K562 (cell line): ENCODE measurements at regions of chr6 and their contacts with region 1.

Region 1: DNA sequence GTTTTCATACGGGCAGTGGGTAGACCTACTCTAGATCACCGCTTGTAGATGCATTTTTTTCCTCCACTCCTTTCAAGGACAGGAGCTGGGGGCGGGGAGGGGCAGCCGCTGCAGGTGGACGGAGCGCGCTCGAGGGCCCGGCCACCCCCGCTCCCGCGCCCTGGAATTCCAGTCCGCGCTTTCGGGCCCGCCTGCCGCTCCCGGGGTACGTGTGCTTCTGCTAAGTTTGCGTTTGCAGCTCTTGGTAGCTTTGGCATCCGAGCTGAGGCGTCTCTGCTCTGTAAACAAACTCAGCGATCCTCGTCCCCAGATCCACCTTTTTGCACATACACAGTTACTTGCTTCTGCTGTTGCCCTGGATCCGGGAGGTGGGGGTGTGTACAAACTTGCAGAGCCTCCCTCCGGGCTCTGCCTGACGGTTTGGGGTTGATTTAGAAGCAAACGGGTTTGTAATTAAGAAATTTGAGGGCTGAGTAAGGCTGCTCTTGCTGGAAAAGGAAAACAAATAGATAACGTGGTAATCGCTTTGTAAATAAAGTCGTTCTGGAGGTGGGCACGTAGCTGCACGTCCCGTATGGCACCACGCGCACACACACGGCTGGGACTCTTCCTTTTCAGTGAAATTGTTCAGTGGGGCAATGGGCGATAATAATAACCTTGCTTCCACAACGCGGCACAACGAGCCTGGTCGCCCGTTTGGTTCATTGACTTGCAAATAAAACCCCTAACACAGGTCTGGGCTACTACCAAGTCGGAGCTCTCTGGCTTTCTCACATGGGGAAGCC is 976 bp upstream of the CITED2 start:
- DNase-seq: peak; percentile 88 to 96 (median 89)
- ATAC-seq: peak; percentile 74
- H3K4me3 ChIP-seq: peak overlapping the region; percentile 83
- H3K27ac ChIP-seq: peak overlapping the region; percentile 97
- H3K4me1 ChIP-seq: peaks cover 43 to 45% of the 10 kb centered on the region in 2 experiments
- H3K27me3 ChIP-seq: no peaks in the 10 kb centered on the region
- CTCF ChIP-seq: peak in 1 of 3 experiments; percentile 47; a peak in 1 of 6 replicates
- EP300 ChIP-seq: peak; percentile 51
- POLR2A ChIP-seq: peak; percentile 78
- RAD21 ChIP-seq: peak; percentile 65 to 72

Region 2: DNA sequence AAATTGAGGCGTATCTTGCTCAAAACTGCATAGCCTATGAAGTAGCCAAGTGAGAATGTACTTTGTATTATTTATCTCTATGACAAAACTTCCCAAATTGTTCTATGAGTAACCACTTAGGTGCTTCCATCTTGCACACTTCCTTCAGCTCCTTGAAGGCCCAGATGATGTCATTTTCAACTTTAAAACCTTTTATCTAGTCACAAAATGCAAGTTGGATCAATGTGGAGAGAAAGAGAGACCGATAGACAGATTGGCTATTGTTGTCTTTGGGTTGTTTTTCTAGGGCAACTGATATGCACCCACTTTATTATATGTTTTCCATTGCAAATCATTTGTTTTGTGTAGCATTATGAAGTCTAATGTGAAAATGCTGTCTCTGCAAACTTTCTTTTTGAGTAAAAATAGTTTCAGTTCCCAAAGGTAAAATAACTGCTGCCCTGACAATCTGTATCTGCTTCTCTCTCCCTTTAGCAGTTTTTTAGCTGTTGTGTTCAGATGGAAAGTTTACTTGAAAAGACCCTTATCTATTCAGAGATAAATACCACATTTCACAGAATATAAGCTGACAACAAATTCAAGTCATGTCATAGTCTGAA is 72.7 kb after region 1 on chr6:
- CTCF ChIA-PET with region 1: no interaction called
- POLR2A ChIA-PET with region 1: interaction called, 18 read pairs
- in situ Hi-C with region 1: no loop called
- intact Hi-C with region 1: loop called (anchors 1 kb)
- DNase-seq: peak in 3 of 4 experiments; percentile 27 to 70 (median 35)
- ATAC-seq: peak; percentile 30
- H3K4me3 ChIP-seq: no peak overlapping the region
- H3K27ac ChIP-seq: peak overlapping the region; percentile 87
- H3K4me1 ChIP-seq: peaks cover 11 to 65% of the 10 kb centered on the region in 2 experiments
- H3K27me3 ChIP-seq: no peaks in the 10 kb centered on the region
- CTCF ChIP-seq: no peak
- EP300 ChIP-seq: peak; percentile 66
- POLR2A ChIP-seq: no peak
- RAD21 ChIP-seq: 0 out of 4 replicates have a peak, but pooled peaks of 1 of the 2 experiments have one; percentile 28

Region 3: DNA sequence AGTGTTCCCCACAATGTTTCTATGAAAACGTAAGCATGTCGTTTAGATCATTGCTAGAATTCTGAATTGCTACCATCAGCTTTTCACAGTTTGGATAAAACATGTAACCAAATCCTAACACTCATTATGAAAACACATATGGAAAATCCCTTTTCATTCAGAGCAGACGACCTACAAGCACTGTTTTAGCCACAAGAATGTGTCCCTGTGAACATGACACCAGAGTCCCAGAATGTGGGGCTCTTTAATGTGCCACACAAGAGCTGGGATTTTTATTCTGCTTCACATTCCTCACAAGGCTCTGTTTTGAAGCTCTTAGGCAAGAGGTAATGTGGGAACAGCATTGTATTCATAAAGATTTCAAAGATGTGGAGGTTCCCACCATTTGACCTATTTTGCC is 140.1 kb after region 1 on chr6:
- CTCF ChIA-PET with region 1: no interaction called
- POLR2A ChIA-PET with region 1: interaction called, 41 read pairs
- in situ Hi-C with region 1: loop called (anchors 10 kb)
- intact Hi-C with region 1: loop called (anchors 1 kb)
- DNase-seq: no peak
- ATAC-seq: no peak
- H3K4me3 ChIP-seq: no peak overlapping the region
- H3K27ac ChIP-seq: no peak overlapping the region
- H3K4me1 ChIP-seq: peaks cover 11 to 44% of the 10 kb centered on the region in 2 experiments; a peak in 4 of 5 replicates
- H3K27me3 ChIP-seq: no peaks in the 10 kb centered on the region
- CTCF ChIP-seq: no peak
- EP300 ChIP-seq: no peak
- POLR2A ChIP-seq: no peak
- RAD21 ChIP-seq: no peak

Region 4: GRCh38 chr6:139588076-139588639 is 212.7 kb after region 1 on chr6:
- CTCF ChIA-PET with region 1: no interaction called
- POLR2A ChIA-PET with region 1: interaction called, 16 read pairs
- in situ Hi-C with region 1: no loop called
- intact Hi-C with region 1: loop called (anchors 5 kb)
- DNase-seq: peak; percentile 39 to 83 (median 58)
- ATAC-seq: peak; percentile 63
- H3K4me3 ChIP-seq: no peak overlapping the region
- H3K27ac ChIP-seq: no peak overlapping the region
- H3K4me1 ChIP-seq: peaks cover 0 to 31% of the 10 kb centered on the region in 2 experiments; a peak in 3 of 5 replicates
- H3K27me3 ChIP-seq: no peaks in the 10 kb centered on the region
- CTCF ChIP-seq: no peak
- EP300 ChIP-seq: peak; percentile 55
- POLR2A ChIP-seq: no peak
- RAD21 ChIP-seq: peak in 1 of 2 experiments; percentile 18; a peak in 1 of 4 replicates

Region 5: GRCh38 chr6:139686309-139686708 is 310.9 kb after region 1 on chr6:
- CTCF ChIA-PET with region 1: interaction called, 4 read pairs
- POLR2A ChIA-PET with region 1: interaction called, 22 read pairs
- in situ Hi-C with region 1: no loop called
- intact Hi-C with region 1: no loop called
- DNase-seq: peak in 1 of 4 experiments; percentile 33
- ATAC-seq: peak; percentile 67
- H3K4me3 ChIP-seq: no peak overlapping the region
- H3K27ac ChIP-seq: no peak overlapping the region
- H3K4me1 ChIP-seq: peaks cover 3 to 10% of the 10 kb centered on the region in 2 experiments
- H3K27me3 ChIP-seq: no peaks in the 10 kb centered on the region
- CTCF ChIP-seq: no peak
- EP300 ChIP-seq: peak; percentile 51; the same call in 1 of the 2 replicates
- POLR2A ChIP-seq: no peak
- RAD21 ChIP-seq: no peak

Region 6: DNA sequence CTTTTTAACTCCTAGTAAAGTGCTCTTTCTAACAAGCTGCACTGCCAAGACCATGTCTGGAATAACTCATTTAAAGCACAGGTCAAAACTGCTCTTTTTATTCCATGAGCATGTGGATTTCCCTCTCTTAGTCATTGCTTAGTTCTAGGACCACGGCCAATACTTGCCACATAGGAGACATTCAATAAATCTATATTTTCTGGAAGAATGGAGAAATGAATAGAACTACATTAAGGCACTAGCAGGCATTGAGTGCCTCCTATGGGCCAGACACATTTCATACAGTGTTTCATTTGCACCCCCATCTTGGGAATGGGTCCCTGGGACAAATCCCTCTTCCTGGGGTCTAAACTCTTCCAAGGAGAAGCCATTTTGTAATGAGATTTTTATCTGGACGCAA is 551.8 kb after region 1 on chr6:
- CTCF ChIA-PET with region 1: no interaction called
- POLR2A ChIA-PET with region 1: interaction called, 3 read pairs
- in situ Hi-C with region 1: no loop called
- intact Hi-C with region 1: loop called (anchors 2 kb)
- DNase-seq: peak in 3 of 4 experiments; percentile 22 to 37 (median 30)
- ATAC-seq: peak; percentile 81
- H3K4me3 ChIP-seq: no peak overlapping the region
- H3K27ac ChIP-seq: no peak overlapping the region
- H3K4me1 ChIP-seq: peaks cover 0 to 15% of the 10 kb centered on the region in 2 experiments; a peak in 3 of 5 replicates
- H3K27me3 ChIP-seq: no peaks in the 10 kb centered on the region
- CTCF ChIP-seq: peak; percentile 30 to 69 (median 55); a peak in 5 of 6 replicates
- EP300 ChIP-seq: no peak
- POLR2A ChIP-seq: no peak
- RAD21 ChIP-seq: peak; percentile 82 to 85